ENCODE measurements at regions of chr7 and their contacts with region 1.

Region 1: GRCh38 chr7:155804897-155805825 is 7.1 kb downstream of the SHH start:
- DNase-seq: peak; percentile 51 to 84 (median 72)
- ATAC-seq: peak; percentile 52
- H3K4me3 ChIP-seq: peak overlapping the region; percentile 16 to 18
- H3K27ac ChIP-seq: peak overlapping the region; percentile 61 to 62
- H3K4me1 ChIP-seq: peaks cover 23 to 74% of the 10 kb centered on the region in 2 donors
- H3K27me3 ChIP-seq: peaks cover 81 to 100% of the 10 kb centered on the region in 2 donors
- CTCF ChIP-seq: peak in 1 of 2 donors; percentile 45

Region 2: DNA sequence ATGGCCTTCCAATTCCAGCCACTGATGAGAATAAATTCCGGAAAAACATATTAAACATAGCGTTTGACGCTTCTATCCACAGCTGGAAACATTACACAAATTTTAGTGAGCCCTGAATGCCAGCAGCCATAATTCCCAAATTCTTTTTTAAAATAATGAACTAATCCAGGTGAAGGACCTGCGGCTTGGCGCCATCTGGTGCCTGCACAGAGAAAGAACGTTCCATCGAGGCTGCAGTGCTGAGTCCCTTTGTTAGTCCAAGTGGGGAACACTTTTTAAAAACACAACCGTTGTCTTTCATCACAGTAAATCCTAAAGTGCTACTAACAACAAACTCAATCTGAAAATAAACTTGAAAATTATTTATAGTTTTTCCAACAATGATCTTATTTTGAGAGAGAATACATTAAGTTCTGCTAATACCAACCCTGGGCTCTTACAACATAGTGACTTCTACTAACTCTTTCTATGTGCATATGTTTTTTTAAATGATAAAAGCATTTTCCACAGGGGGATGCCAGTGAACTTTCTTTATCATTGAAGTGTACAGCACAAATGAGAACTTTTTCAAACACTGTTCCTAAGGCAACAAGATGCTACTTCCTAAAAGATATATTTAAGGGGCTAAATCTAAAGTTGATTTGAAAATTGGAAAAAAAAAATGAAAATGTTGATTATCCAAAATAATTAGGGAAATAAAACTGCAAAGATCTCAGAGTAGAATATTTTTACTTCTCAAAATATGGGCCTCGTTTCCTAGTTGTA is 668.5 kb after region 1 on chr7:
- intact Hi-C with region 1: loop called in 1 of 2 experiments (anchors 10 kb)
- DNase-seq: peak in 1 of 4 donors; percentile 37
- ATAC-seq: peak; percentile 83
- H3K4me3 ChIP-seq: no peak overlapping the region
- H3K27ac ChIP-seq: no peak overlapping the region
- H3K4me1 ChIP-seq: no peaks in the 10 kb centered on the region
- H3K27me3 ChIP-seq: no peaks in the 10 kb centered on the region
- CTCF ChIP-seq: peak; percentile 41 to 59

Measured in left lung (tissue), 14 donors.